ENCODE measurements at regions of chr3 and their contacts with region 1.

Region 1: GRCh38 chr3:184174646-184175492 is at the start of gene AP2M1:
- DNase-seq: peak; percentile 98
- H3K4me3 ChIP-seq: peak within 1 kb of the TSS; percentile 88
- H3K4me3 Mint-ChIP-seq: peak within 1 kb of the TSS; percentile 97
- H3K27ac Mint-ChIP-seq: peak within 1 kb of the TSS; percentile 94
- H3K4me1 ChIP-seq: peaks cover 19% of the 10 kb centered on the region
- H3K4me1 Mint-ChIP-seq: peaks cover 7% of the 10 kb centered on the region
- H3K27me3 ChIP-seq: no peaks in the 10 kb centered on the region
- H3K27me3 Mint-ChIP-seq: no peaks in the 10 kb centered on the region
- CTCF ChIP-seq: no peak
- total RNA-seq, gene AP2M1: 202 and 214 TPM in 2 replicates

Region 2: DNA sequence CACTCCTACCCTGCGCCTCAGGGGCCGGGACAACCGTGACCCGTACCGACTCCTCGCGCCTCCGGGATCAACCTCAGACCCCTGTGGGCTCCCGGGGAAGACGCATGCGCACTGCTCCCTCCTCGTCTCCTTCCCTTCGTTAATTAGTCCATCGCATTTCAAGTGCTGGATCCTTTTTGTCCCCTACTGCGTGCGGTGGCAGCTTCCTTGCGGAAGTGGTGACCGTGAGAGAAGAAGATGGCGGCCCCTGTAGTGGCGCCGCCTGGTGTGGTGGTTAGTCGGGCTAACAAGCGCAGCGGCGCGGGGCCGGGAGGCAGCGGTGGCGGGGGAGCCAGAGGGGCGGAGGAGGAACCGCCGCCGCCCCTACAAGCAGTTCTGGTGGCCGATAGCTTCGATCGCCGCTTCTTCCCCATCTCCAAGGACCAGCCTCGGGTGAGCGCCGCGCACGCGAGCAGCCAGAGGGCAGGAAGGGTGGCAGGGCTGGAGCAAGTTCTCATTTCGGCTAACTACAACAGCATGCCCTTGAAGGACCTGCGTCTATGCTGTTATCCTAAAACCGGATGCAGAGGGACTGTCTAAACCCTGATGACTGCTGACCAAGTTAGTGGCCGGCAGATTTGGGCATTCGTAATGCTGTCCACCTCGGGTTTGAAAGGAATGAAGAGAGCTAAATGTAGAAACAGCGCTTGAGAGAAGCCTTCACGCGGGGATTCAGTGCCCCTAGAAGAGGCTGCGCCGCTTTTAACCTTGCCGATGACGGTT is 39.5 kb before region 1 on chr3 and contains the start of gene EIF2B5:
- CTCF ChIA-PET with region 1: interaction called, 10 read pairs
- POLR2A ChIA-PET with region 1: interaction called, 3 read pairs
- intact Hi-C with region 1: loop called (anchors 5 kb)
- DNase-seq: peak; percentile 89 to 92
- H3K4me3 ChIP-seq: peak within 1 kb of the TSS; percentile 78
- H3K4me3 Mint-ChIP-seq: peak within 1 kb of the TSS; percentile 98
- H3K27ac Mint-ChIP-seq: peak within 1 kb of the TSS; percentile 93
- H3K4me1 ChIP-seq: peaks cover 9% of the 10 kb centered on the region; the same call in 1 of the 2 replicates
- H3K4me1 Mint-ChIP-seq: peaks cover 7% of the 10 kb centered on the region
- H3K27me3 ChIP-seq: no peaks in the 10 kb centered on the region
- H3K27me3 Mint-ChIP-seq: no peaks in the 10 kb centered on the region
- CTCF ChIP-seq: peak in 1 of 2 experiments; percentile 59
- total RNA-seq, gene EIF2B5: 43.8 and 52.9 TPM in 2 replicates

Region 3: GRCh38 chr3:184155644-184156521 is 19.0 kb before region 1 on chr3:
- CTCF ChIA-PET with region 1: interaction called, 3 read pairs
- POLR2A ChIA-PET with region 1: no interaction called
- intact Hi-C with region 1: loop called (anchors 1 kb)
- DNase-seq: peak in 1 of 2 experiments; percentile 53
- H3K4me3 ChIP-seq: peak overlapping the region; percentile 81
- H3K4me3 Mint-ChIP-seq: peak overlapping the region; percentile 98
- H3K27ac Mint-ChIP-seq: peak overlapping the region; percentile 87
- H3K4me1 ChIP-seq: peaks cover 7% of the 10 kb centered on the region; the same call in 1 of the 2 replicates
- H3K4me1 Mint-ChIP-seq: peaks cover 7% of the 10 kb centered on the region
- H3K27me3 ChIP-seq: no peaks in the 10 kb centered on the region
- H3K27me3 Mint-ChIP-seq: no peaks in the 10 kb centered on the region
- CTCF ChIP-seq: no peak

Region 4: DNA sequence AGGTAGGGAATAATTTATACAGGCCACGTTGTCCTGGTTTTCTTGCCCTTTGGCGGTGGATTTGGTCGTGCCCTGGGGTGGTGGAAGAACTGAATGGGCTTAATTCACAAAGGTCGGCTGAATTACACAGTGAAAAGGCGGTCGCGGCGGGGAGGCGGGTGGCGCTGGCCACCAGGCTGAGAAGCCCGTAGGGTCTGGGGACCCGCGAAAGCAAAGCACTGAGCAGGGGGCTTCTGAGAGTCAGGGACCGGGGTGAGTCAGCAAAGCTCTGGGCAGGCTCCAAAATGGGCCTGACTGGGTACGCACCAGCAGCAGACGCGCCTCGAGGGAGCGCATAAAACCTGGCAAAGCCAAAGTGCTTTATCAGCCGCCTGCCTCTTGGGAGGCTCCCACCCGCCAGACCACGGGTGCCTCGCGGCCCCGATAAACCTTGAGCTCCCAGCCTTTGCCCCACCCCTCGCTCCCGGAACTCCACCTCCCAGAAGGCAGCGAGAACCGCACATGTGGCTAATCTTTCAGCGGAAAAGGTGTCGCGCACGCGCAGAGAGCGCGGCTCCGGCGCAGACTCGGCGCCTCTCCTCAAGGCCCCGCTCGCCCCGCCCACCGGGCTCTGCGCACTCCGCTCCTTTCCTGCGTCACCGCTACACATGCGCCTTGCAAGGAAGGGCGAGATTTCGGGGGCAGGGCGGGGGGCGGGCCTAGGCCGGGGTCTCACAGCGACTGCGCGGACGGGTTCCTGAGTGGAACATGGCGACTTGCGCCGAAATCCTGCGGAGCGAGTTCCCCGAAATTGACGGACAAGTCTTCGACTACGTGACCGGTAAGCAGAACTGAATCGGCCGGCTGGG is 10.8 kb after region 1 on chr3 and contains the start of gene ABCF3:
- CTCF ChIA-PET with region 1: interaction called, 4 read pairs
- POLR2A ChIA-PET with region 1: interaction called, 8 read pairs
- intact Hi-C with region 1: loop called (anchors 1 kb)
- DNase-seq: peak; percentile 98 to 99
- H3K4me3 ChIP-seq: peak within 1 kb of the TSS; percentile 95
- H3K4me3 Mint-ChIP-seq: peak within 1 kb of the TSS; percentile 86
- H3K27ac Mint-ChIP-seq: peak within 1 kb of the TSS; percentile 96
- H3K4me1 ChIP-seq: 0 out of 2 replicates have a peak, but pooled peaks cover 8% of the 10 kb centered on the region
- H3K4me1 Mint-ChIP-seq: peaks cover 15% of the 10 kb centered on the region
- H3K27me3 ChIP-seq: no peaks in the 10 kb centered on the region
- H3K27me3 Mint-ChIP-seq: no peaks in the 10 kb centered on the region
- CTCF ChIP-seq: no peak
- total RNA-seq, gene ABCF3: 68.8 and 69.8 TPM in 2 replicates

Region 5: DNA sequence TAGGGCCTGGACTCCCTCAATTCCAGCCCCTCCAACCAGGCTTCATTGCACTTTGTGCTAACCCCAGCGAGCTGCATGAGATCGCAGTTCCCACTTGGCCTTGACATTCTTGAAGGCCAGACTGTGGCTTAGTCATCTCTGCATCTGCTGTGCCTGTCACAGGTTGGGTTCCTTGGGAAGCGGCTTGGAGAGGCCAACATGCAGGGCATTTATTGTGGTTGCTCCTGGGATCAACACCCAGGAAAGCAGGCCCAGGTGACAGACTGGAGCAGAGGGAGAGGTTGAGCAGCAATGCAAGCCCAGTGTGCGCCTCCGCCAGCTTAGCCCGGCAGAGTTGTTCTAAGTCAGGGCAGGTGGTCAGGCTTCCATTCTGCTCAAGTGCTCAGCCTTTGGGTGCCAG is 21.7 kb after region 1 on chr3:
- CTCF ChIA-PET with region 1: no interaction called
- POLR2A ChIA-PET with region 1: no interaction called
- intact Hi-C with region 1: no loop called
- DNase-seq: no peak
- H3K4me3 ChIP-seq: no peak overlapping the region
- H3K4me3 Mint-ChIP-seq: no peak overlapping the region
- H3K27ac Mint-ChIP-seq: no peak overlapping the region
- H3K4me1 ChIP-seq: no peaks in the 10 kb centered on the region
- H3K4me1 Mint-ChIP-seq: no peaks in the 10 kb centered on the region
- H3K27me3 ChIP-seq: no peaks in the 10 kb centered on the region
- H3K27me3 Mint-ChIP-seq: no peaks in the 10 kb centered on the region
- CTCF ChIP-seq: no peak

Region 6: GRCh38 chr3:184229394-184230080 is 54.7 kb after region 1 on chr3 and contains the start of gene VWA5B2:
- CTCF ChIA-PET with region 1: no interaction called
- POLR2A ChIA-PET with region 1: no interaction called
- intact Hi-C with region 1: no loop called
- DNase-seq: peak; percentile 62 to 84
- H3K4me3 ChIP-seq: peak within 1 kb of the TSS; percentile 58
- H3K4me3 Mint-ChIP-seq: peak within 1 kb of the TSS; percentile 70
- H3K27ac Mint-ChIP-seq: no peak within 1 kb of the TSS
- H3K4me1 ChIP-seq: peaks cover 9% of the 10 kb centered on the region
- H3K4me1 Mint-ChIP-seq: peaks cover 7% of the 10 kb centered on the region
- H3K27me3 ChIP-seq: peaks cover 5% of the 10 kb centered on the region
- H3K27me3 Mint-ChIP-seq: peaks cover 27% of the 10 kb centered on the region
- CTCF ChIP-seq: peak in 1 of 2 experiments; percentile 5
- total RNA-seq, gene VWA5B2: 0.79 and 1.6 TPM in 2 replicates

Region 7: GRCh38 chr3:184298759-184299496 is 124.1 kb after region 1 on chr3 and contains the start of gene PSMD2:
- CTCF ChIA-PET with region 1: no interaction called
- POLR2A ChIA-PET with region 1: no interaction called
- intact Hi-C with region 1: loop called (anchors 2 kb)
- DNase-seq: peak; percentile 97
- H3K4me3 ChIP-seq: peak within 1 kb of the TSS; percentile 77
- H3K4me3 Mint-ChIP-seq: peak within 1 kb of the TSS; percentile 81
- H3K27ac Mint-ChIP-seq: peak within 1 kb of the TSS; percentile 80
- H3K4me1 ChIP-seq: peaks cover 6% of the 10 kb centered on the region; the same call in 1 of the 2 replicates
- H3K4me1 Mint-ChIP-seq: no peaks in the 10 kb centered on the region
- H3K27me3 ChIP-seq: no peaks in the 10 kb centered on the region
- H3K27me3 Mint-ChIP-seq: no peaks in the 10 kb centered on the region
- CTCF ChIP-seq: no peak
- total RNA-seq, gene PSMD2: 285 and 294 TPM in 2 replicates

Measured in Caco-2 (cell line).